CD4-positive, alpha-beta memory T cell (primary cell): ENCODE measurements at regions of chr17 and their contacts with region 1.

Region 1: GRCh38 chr17:58517734-58518609 is 3.5 kb upstream of the MTMR4 start:
- DNase-seq: peak; percentile 100
- H3K4me3 ChIP-seq: peak overlapping the region; percentile 82 to 98
- H3K4me3 Mint-ChIP-seq: peak overlapping the region; percentile 88 to 100 (median 96)
- H3K27ac ChIP-seq: peak overlapping the region; percentile 65
- H3K27ac Mint-ChIP-seq: peak overlapping the region; percentile 90 to 99 (median 97)
- H3K4me1 ChIP-seq: peaks cover 47% of the 10 kb centered on the region
- H3K4me1 Mint-ChIP-seq: peaks cover 27 to 55% (median 37%) of the 10 kb centered on the region in 4 donors
- H3K27me3 ChIP-seq: no peaks in the 10 kb centered on the region
- H3K27me3 Mint-ChIP-seq: peaks cover 0 to 2% of the 10 kb centered on the region in 2 donors

Region 2: GRCh38 chr17:57084802-57085447 is 1433.0 kb before region 1 on chr17 and contains the start of gene AKAP1:
- CTCF ChIA-PET with region 1: no interaction called
- POLR2A ChIA-PET with region 1: no interaction called
- intact Hi-C with region 1: loop called (anchors 10 kb)
- DNase-seq: peak; percentile 93 to 98 (median 98)
- H3K4me3 ChIP-seq: peak within 1 kb of the TSS; percentile 72 to 99
- H3K4me3 Mint-ChIP-seq: peak within 1 kb of the TSS; percentile 91 to 95 (median 92)
- H3K27ac ChIP-seq: peak within 1 kb of the TSS; percentile 83
- H3K27ac Mint-ChIP-seq: peak within 1 kb of the TSS; percentile 93 to 98 (median 95)
- H3K4me1 ChIP-seq: peaks cover 18% of the 10 kb centered on the region
- H3K4me1 Mint-ChIP-seq: peaks cover 22 to 35% (median 27%) of the 10 kb centered on the region in 4 donors
- H3K27me3 ChIP-seq: no peaks in the 10 kb centered on the region
- H3K27me3 Mint-ChIP-seq: no peaks in the 10 kb centered on the region
- total RNA-seq, gene AKAP1: 33.0 to 35.7 TPM

Region 3: DNA sequence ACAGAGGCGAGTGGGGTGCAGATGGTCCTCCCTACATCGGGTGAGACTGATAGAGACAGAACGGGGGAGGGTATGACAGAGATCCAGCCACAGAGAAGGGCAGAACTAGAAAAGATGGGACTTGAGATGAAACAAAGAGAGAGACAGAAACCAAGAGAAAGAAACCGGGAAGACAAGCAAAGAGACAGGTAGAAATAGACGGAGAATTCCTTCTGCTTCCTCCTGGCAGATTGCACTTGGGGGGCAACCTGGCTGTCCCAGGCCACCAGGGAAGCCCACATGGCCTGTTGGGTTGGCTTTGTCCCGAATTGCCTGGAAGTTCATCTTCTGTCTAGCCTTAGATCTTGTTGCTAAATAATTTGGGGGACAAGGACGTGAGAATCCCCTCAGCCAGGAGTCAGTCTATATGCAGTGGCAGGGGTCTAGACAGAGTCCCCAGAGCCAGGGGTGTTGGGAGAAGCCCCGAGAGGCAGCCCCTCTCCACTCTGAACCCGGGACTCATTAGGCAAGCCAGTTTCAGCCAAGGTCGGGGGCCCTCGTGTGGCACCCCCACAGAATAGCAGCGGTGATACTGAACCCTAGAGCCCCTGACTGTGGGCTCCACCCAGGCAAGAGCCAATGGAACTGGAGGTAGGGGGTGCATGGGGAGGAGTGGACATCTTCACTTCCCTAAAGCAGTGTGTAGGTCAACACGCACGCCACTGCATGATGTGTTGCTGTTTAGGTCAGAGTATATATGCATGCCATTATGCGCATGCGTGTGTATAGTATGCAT is 188.8 kb before region 1 on chr17:
- CTCF ChIA-PET with region 1: no interaction called
- POLR2A ChIA-PET with region 1: interaction called, 12 read pairs
- intact Hi-C with region 1: loop called (anchors 1 kb)
- DNase-seq: peak; percentile 67 to 79 (median 73)
- H3K4me3 ChIP-seq: peak overlapping the region; percentile 82 to 99
- H3K4me3 Mint-ChIP-seq: peak overlapping the region; percentile 88 to 99 (median 98)
- H3K27ac ChIP-seq: peak overlapping the region; percentile 97
- H3K27ac Mint-ChIP-seq: peak overlapping the region; percentile 93 to 99 (median 97)
- H3K4me1 ChIP-seq: peaks cover 47% of the 10 kb centered on the region
- H3K4me1 Mint-ChIP-seq: peaks cover 25 to 72% (median 36%) of the 10 kb centered on the region in 4 donors
- H3K27me3 ChIP-seq: no peaks in the 10 kb centered on the region
- H3K27me3 Mint-ChIP-seq: no peaks in the 10 kb centered on the region

Region 4: GRCh38 chr17:58487589-58488427 is 30.2 kb before region 1 on chr17 and contains the start of gene HSF5:
- CTCF ChIA-PET with region 1: interaction called, 14 read pairs
- POLR2A ChIA-PET with region 1: interaction called, 16 read pairs
- intact Hi-C with region 1: loop called (anchors 1 kb)
- DNase-seq: peak; percentile 76 to 83 (median 82)
- H3K4me3 ChIP-seq: peak within 1 kb of the TSS; percentile 46 to 47
- H3K4me3 Mint-ChIP-seq: peak within 1 kb of the TSS; percentile 50 to 81 (median 70)
- H3K27ac ChIP-seq: peak within 1 kb of the TSS; percentile 20
- H3K27ac Mint-ChIP-seq: peak within 1 kb of the TSS in 5 of 7 donors; percentile 15 to 72 (median 47)
- H3K4me1 ChIP-seq: peaks cover 4% of the 10 kb centered on the region
- H3K4me1 Mint-ChIP-seq: peaks cover 5 to 15% (median 5%) of the 10 kb centered on the region in 4 donors
- H3K27me3 ChIP-seq: no peaks in the 10 kb centered on the region
- H3K27me3 Mint-ChIP-seq: no peaks in the 10 kb centered on the region
- total RNA-seq, gene HSF5: 2.1 to 2.4 TPM

Region 5: GRCh38 chr17:58595326-58595725 is 77.4 kb after region 1 on chr17:
- CTCF ChIA-PET with region 1: no interaction called
- POLR2A ChIA-PET with region 1: no interaction called
- intact Hi-C with region 1: no loop called
- DNase-seq: no peak
- H3K4me3 ChIP-seq: no peak overlapping the region
- H3K4me3 Mint-ChIP-seq: no peak overlapping the region
- H3K27ac ChIP-seq: no peak overlapping the region
- H3K27ac Mint-ChIP-seq: no peak overlapping the region
- H3K4me1 ChIP-seq: no peaks in the 10 kb centered on the region
- H3K4me1 Mint-ChIP-seq: no peaks in the 10 kb centered on the region
- H3K27me3 ChIP-seq: no peaks in the 10 kb centered on the region
- H3K27me3 Mint-ChIP-seq: no peaks in the 10 kb centered on the region

Region 6: GRCh38 chr17:58631523-58632323 is 113.8 kb after region 1 on chr17:
- CTCF ChIA-PET with region 1: interaction called, 7 read pairs
- POLR2A ChIA-PET with region 1: interaction called, 67 read pairs
- intact Hi-C with region 1: loop called (anchors 1 kb)
- DNase-seq: peak; percentile 92 to 95 (median 94)
- H3K4me3 ChIP-seq: peak overlapping the region; percentile 31 to 47
- H3K4me3 Mint-ChIP-seq: no peak overlapping the region
- H3K27ac ChIP-seq: peak overlapping the region; percentile 83
- H3K27ac Mint-ChIP-seq: no peak overlapping the region
- H3K4me1 ChIP-seq: peaks cover 16% of the 10 kb centered on the region
- H3K4me1 Mint-ChIP-seq: peaks cover 0 to 4% (median 1%) of the 10 kb centered on the region in 4 donors
- H3K27me3 ChIP-seq: no peaks in the 10 kb centered on the region
- H3K27me3 Mint-ChIP-seq: no peaks in the 10 kb centered on the region

Region 7: GRCh38 chr17:59004338-59005111 is 486.6 kb after region 1 on chr17:
- CTCF ChIA-PET with region 1: interaction called, 40 read pairs
- POLR2A ChIA-PET with region 1: interaction called, 28 read pairs
- intact Hi-C with region 1: loop called (anchors 1 kb)
- DNase-seq: peak; percentile 57 to 68 (median 62)
- H3K4me3 ChIP-seq: no peak overlapping the region
- H3K4me3 Mint-ChIP-seq: peak overlapping the region in 2 of 8 donors; percentile 20 to 28
- H3K27ac ChIP-seq: no peak overlapping the region
- H3K27ac Mint-ChIP-seq: peak overlapping the region; percentile 49 to 91 (median 67)
- H3K4me1 ChIP-seq: peaks cover 6% of the 10 kb centered on the region
- H3K4me1 Mint-ChIP-seq: peaks cover 9 to 17% (median 13%) of the 10 kb centered on the region in 4 donors
- H3K27me3 ChIP-seq: no peaks in the 10 kb centered on the region
- H3K27me3 Mint-ChIP-seq: no peaks in the 10 kb centered on the region

Region 8: GRCh38 chr17:59220376-59221158 is 702.6 kb after region 1 on chr17 and contains the start of gene GDPD1:
- CTCF ChIA-PET with region 1: no interaction called
- POLR2A ChIA-PET with region 1: no interaction called
- intact Hi-C with region 1: loop called (anchors 2 kb)
- DNase-seq: peak; percentile 95 to 98 (median 96)
- H3K4me3 ChIP-seq: peak within 1 kb of the TSS; percentile 97 to 98
- H3K4me3 Mint-ChIP-seq: peak within 1 kb of the TSS; percentile 96 to 100 (median 98)
- H3K27ac ChIP-seq: peak within 1 kb of the TSS; percentile 92
- H3K27ac Mint-ChIP-seq: peak within 1 kb of the TSS; percentile 96 to 100 (median 99)
- H3K4me1 ChIP-seq: peaks cover 7% of the 10 kb centered on the region
- H3K4me1 Mint-ChIP-seq: peaks cover 7 to 15% (median 12%) of the 10 kb centered on the region in 4 donors
- H3K27me3 ChIP-seq: no peaks in the 10 kb centered on the region
- H3K27me3 Mint-ChIP-seq: no peaks in the 10 kb centered on the region
- total RNA-seq, gene GDPD1: 4.5 to 5.3 TPM